Sigmoid colon (tissue), 7 donors: ENCODE measurements at regions of chr6 and their contacts with region 1.

Region 1: DNA sequence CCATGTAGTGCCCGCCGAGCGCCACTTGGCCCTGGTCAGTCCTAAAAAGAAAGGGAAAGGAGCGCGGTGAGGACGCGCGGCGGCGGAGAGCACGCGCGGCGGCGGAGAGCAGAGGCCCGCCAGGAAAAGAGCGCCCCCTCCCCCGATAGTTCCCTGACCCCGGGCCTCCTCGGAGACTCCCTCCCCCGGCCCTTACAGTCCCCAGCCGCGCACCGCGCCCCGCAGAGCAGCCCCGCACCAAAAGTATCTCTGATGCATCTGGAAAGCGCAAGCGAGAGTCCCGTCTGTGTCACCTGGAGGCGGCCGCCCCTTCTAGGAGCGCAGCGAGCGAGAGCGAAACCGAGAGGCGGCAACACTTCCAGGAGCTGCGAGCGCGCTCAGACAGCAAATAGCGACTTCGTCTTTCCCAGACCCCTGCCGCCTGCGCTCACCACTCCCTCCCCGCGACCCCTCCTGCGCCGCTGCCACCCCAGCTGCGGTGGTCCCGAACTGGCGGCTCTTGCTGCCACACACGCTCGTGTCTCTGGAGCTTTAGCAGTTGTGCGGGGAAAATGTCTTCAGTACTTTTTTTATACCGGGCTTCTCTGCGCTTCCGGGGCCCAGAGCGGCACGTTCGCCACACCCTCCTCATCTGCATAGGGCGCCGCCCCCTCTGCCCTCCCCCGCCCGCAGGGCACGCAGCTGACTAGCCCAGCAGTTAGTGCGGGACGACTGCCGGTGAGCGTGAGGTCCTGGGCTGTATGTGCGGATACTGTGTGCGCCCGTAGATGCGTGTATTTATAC is at the start of gene TENT5A:
- DNase-seq: peak; percentile 98
- H3K4me3 ChIP-seq: peak within 1 kb of the TSS; percentile 81 to 94 (median 90)
- H3K27ac ChIP-seq: peak within 1 kb of the TSS; percentile 96 to 98 (median 98)
- H3K4me1 ChIP-seq: peaks cover 0 to 31% (median 22%) of the 10 kb centered on the region in 4 donors
- H3K27me3 ChIP-seq: no peaks in the 10 kb centered on the region
- CTCF ChIP-seq: no peak
- EP300 ChIP-seq: no peak
- POLR2A ChIP-seq: peak; percentile 78 to 93
- total RNA-seq, gene TENT5A: 13.4 to 29.3 (median 23.6) TPM

Region 2: DNA sequence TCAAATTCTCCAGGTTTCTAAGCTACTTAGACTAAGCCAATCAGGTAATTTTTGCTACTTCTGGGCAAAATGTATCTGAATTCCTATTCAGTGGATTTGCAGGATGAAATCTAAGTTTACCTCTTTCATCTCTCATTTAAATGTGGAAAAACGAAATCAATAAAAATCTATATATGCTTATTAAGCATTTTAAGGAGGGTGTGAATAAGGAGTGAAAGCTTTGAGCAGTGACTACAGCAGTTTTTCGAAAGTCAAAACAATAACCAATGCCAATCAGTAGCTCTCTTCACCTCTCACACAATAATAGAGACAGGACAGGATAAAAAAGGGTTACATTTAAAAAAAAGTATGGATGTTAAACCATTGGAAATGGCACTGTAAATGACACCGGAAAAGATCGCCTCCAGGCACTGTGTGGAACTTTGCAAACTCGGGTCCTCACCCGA is 1646.3 kb before region 1 on chr6:
- intact Hi-C with region 1: loop called (anchors 1 kb)
- DNase-seq: no peak
- H3K4me3 ChIP-seq: peak overlapping the region; percentile 62 to 87 (median 70)
- H3K27ac ChIP-seq: peak overlapping the region; percentile 82 to 93 (median 88)
- H3K4me1 ChIP-seq: peaks cover 0 to 15% (median 8%) of the 10 kb centered on the region in 4 donors
- H3K27me3 ChIP-seq: no peaks in the 10 kb centered on the region
- CTCF ChIP-seq: no peak
- EP300 ChIP-seq: no peak
- POLR2A ChIP-seq: no peak

Region 3: GRCh38 chr6:80214436-80215022 is 1537.8 kb before region 1 on chr6:
- intact Hi-C with region 1: loop called (anchors 2 kb)
- DNase-seq: no peak
- H3K4me3 ChIP-seq: no peak overlapping the region
- H3K27ac ChIP-seq: peak overlapping the region in 1 of 4 donors; percentile 13
- H3K4me1 ChIP-seq: peaks cover 0 to 66% (median 32%) of the 10 kb centered on the region in 4 donors
- H3K27me3 ChIP-seq: no peaks in the 10 kb centered on the region
- CTCF ChIP-seq: peak; percentile 18 to 72 (median 52)
- EP300 ChIP-seq: no peak
- POLR2A ChIP-seq: no peak

Region 4: GRCh38 chr6:80605165-80605989 is 1147.0 kb before region 1 on chr6:
- intact Hi-C with region 1: loop called (anchors 2 kb)
- DNase-seq: no peak
- H3K4me3 ChIP-seq: no peak overlapping the region
- H3K27ac ChIP-seq: no peak overlapping the region
- H3K4me1 ChIP-seq: peaks cover 0 to 20% (median 17%) of the 10 kb centered on the region in 4 donors
- H3K27me3 ChIP-seq: no peaks in the 10 kb centered on the region
- CTCF ChIP-seq: peak in 3 of 4 experiments; percentile 12 to 57 (median 45)
- EP300 ChIP-seq: no peak
- POLR2A ChIP-seq: no peak

Region 5: DNA sequence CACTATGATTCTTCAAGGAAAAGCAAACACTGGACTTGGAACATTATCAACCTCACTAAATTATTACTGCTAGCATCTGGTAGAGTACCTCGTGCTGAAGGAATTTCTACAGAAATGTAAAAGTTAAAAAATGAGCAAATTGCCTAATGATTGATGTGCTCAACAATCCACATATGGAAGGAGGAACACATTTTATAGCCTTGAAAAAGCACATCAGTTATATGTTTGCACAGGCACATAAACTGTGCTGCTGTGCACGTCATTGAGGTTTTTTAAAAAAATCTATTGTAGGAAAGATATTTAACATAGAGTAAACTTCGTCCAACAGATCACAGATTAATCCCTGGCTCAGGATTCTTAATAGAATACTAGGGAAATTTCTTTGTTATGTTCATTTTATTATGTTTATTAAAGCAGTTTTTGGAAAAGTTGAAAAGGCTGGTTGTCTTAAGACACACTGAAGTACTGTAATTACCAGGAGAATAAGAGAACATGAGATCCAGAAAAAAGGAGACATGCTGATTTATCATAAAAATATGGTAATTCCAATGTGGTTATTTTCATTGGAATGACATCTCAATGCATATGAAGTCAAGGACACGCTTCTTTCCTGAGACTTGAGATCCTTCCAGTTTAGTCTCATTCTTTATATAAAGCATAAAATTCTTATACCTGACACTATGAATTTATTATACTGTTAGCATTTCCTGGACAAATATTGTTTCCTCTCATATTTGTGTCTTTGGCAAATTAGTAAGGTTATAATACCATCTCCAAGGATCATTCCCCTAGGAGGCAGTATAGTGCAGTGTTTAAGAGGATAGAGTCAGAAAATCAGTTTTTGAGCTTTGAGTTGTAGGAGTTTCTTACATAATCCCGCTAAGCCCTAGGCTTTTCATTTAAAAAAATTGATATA is 510.9 kb before region 1 on chr6:
- intact Hi-C with region 1: loop called (anchors 1 kb)
- DNase-seq: no peak
- H3K4me3 ChIP-seq: no peak overlapping the region
- H3K27ac ChIP-seq: no peak overlapping the region
- H3K4me1 ChIP-seq: no peaks in the 10 kb centered on the region
- H3K27me3 ChIP-seq: no peaks in the 10 kb centered on the region
- CTCF ChIP-seq: peak; percentile 8 to 37 (median 30)
- EP300 ChIP-seq: no peak
- POLR2A ChIP-seq: no peak

Region 6: DNA sequence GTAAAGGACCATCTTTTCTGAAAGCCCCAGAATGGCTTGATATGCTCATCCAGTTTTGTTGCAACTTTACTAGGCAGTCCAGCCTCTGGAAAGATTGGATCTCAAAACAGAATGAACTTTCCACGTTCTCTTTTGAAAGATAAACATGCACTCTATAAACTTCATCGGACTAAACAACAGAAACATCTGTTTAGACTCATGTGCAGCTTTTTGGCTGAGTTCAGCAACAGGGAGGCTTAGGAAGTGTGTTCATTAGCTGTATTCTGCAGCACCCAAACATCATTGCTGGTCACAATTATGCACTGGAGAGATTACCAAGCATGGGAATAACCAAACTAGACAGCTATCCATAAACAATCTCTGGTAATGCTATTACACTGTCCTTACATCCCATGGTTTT is 180.3 kb before region 1 on chr6:
- intact Hi-C with region 1: loop called (anchors 5 kb)
- DNase-seq: peak; percentile 67
- H3K4me3 ChIP-seq: no peak overlapping the region
- H3K27ac ChIP-seq: peak overlapping the region in 3 of 4 donors; percentile 65 to 76 (median 66)
- H3K4me1 ChIP-seq: peaks cover 0 to 52% (median 41%) of the 10 kb centered on the region in 4 donors
- H3K27me3 ChIP-seq: no peaks in the 10 kb centered on the region
- CTCF ChIP-seq: no peak
- EP300 ChIP-seq: peak in 3 of 4 donors; percentile 49 to 87 (median 83)
- POLR2A ChIP-seq: no peak

Region 7: GRCh38 chr6:81697559-81697958 is 54.8 kb before region 1 on chr6:
- intact Hi-C with region 1: no loop called
- DNase-seq: no peak
- H3K4me3 ChIP-seq: no peak overlapping the region
- H3K27ac ChIP-seq: peak overlapping the region in 2 of 4 donors; percentile 46 to 51
- H3K4me1 ChIP-seq: peaks cover 0 to 32% (median 15%) of the 10 kb centered on the region in 4 donors
- H3K27me3 ChIP-seq: no peaks in the 10 kb centered on the region
- CTCF ChIP-seq: no peak
- EP300 ChIP-seq: no peak
- POLR2A ChIP-seq: no peak

Region 8: DNA sequence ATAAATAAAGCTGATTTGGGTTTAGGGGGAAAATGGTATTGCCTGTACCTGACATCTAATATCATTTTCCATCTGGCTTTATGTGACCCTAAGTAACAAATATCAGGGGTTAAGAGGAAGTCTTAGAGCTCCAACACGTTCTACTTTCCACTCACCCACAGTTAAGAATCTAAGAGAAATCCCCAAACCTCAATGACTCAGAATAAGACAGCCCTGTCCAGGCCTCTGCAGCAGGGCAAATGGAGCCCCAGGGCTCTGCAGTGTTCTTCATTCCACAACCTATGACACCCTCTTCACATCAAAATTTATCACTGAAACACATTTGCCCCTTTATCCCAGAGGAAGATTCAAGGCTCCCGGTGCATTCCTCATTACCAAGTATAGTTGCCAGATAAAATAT is 20.4 kb after region 1 on chr6:
- intact Hi-C with region 1: no loop called
- DNase-seq: no peak
- H3K4me3 ChIP-seq: no peak overlapping the region
- H3K27ac ChIP-seq: no peak overlapping the region
- H3K4me1 ChIP-seq: no peaks in the 10 kb centered on the region
- H3K27me3 ChIP-seq: no peaks in the 10 kb centered on the region
- CTCF ChIP-seq: no peak
- EP300 ChIP-seq: no peak
- POLR2A ChIP-seq: no peak

Region 9: DNA sequence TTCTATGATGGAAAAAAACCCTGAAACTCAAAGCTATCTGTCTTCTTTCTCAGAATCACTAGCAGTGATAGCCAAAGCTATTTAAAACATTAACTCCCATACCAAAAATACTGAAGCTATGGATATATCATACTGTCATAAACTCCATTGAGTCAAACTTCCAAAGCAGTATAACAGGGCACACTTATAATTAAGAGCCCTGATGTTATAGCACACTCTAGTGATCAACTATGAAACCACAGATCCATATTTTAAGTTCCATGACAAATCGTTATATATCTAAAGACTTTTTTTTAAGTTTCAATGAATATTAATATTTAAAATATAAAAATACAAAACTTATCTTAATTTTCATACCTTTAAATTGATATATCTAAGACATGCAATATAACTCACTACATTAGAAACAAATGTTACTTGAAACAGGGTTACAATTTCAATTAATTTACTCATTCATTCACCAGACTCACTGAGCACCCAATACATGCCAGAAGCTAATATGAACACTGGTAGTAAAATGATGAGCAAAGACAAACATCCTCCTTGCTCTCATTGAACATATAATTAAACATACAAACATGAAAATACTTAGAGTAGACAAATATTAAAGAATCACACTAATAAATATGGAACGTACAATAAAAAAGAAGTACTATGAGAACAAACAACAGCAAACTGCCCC is 425.9 kb after region 1 on chr6:
- intact Hi-C with region 1: loop called (anchors 10 kb)
- DNase-seq: no peak
- H3K4me3 ChIP-seq: no peak overlapping the region
- H3K27ac ChIP-seq: no peak overlapping the region
- H3K4me1 ChIP-seq: no peaks in the 10 kb centered on the region
- H3K27me3 ChIP-seq: no peaks in the 10 kb centered on the region
- CTCF ChIP-seq: peak in 1 of 4 experiments; percentile 17
- EP300 ChIP-seq: no peak
- POLR2A ChIP-seq: no peak